Caco-2 (cell line): ENCODE measurements at regions of chr10 and their contacts with region 1.

Region 1: DNA sequence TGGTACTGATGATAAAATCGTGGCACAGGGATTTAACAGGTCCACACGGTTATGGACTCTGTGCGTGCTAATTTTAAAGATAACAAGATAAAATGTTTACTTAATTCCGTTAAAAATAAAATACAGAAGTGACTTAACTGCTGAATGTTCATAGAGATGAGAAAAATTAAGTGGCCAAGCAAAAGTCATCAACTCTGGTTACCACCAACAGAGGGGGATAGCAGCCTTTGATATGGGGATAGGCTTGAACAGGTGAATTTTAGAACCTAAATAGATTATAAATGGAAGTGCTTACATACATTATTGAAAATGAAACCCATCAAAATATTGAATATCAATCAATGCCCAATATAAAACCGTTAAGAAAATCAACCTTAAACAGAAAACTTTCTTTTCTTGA is 245.0 kb downstream of the WDR37 start:
- DNase-seq: no peak
- H3K4me3 ChIP-seq: no peak overlapping the region
- H3K4me3 Mint-ChIP-seq: no peak overlapping the region
- H3K27ac Mint-ChIP-seq: no peak overlapping the region
- H3K4me1 ChIP-seq: no peaks in the 10 kb centered on the region
- H3K4me1 Mint-ChIP-seq: no peaks in the 10 kb centered on the region
- H3K27me3 ChIP-seq: no peaks in the 10 kb centered on the region; the same call in none of the 2 replicates
- H3K27me3 Mint-ChIP-seq: peaks cover 15% of the 10 kb centered on the region
- CTCF ChIP-seq: peak; percentile 21 to 37

Region 2: DNA sequence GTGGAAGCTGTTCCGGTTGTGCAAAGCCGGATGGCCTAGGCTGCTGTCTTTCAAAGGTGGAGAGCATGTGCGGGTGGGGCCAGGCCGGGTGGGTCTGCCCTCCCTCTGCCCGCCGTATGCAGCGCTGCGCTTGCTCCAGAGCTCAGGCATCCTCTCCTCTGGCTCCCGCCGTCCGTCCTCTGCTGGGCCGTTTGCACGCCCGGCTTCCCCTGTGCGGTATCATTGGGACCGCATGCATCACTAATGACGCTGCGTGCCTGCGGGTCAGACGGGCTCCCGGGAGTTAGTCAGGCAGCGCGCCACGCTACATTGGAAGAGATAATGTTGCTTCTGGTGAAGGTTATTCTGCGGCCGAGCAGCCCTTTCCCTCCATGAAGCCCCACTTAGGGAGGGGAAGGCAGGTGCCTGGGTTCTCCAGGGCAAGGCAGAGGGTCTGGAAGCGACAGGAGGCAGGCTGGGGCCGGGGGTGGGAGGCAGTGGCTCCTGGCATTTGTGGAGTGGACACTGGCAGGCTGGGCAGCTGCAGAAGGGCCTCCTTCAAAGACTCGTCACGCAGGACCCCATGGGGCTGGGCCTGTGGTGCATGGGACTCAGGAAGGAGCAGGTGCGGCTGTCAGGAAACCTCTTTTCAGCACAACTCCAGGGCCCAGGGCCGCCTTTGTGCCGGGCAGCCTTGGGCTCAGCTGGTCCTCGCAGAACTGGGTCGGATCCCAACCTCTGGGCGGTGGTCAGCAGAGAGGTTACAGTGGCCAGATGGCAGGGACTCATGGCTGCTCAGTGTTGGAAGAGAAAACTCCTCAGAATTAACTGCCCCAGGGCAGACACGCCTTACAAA is 73.6 kb after region 1 on chr10:
- CTCF ChIA-PET with region 1: no interaction called
- POLR2A ChIA-PET with region 1: no interaction called
- intact Hi-C with region 1: loop called (anchors 5 kb)
- DNase-seq: no peak
- H3K4me3 ChIP-seq: no peak overlapping the region
- H3K4me3 Mint-ChIP-seq: no peak overlapping the region
- H3K27ac Mint-ChIP-seq: no peak overlapping the region
- H3K4me1 ChIP-seq: peaks cover 5% of the 10 kb centered on the region; the same call in 1 of the 2 replicates
- H3K4me1 Mint-ChIP-seq: peaks cover 10% of the 10 kb centered on the region
- H3K27me3 ChIP-seq: 0 out of 2 replicates have a peak, but pooled peaks cover 2% of the 10 kb centered on the region
- H3K27me3 Mint-ChIP-seq: peaks cover 21% of the 10 kb centered on the region
- CTCF ChIP-seq: no peak